WTC11 (cell line): ENCODE measurements at regions of chr4 and their contacts with region 1.

Region 1: DNA sequence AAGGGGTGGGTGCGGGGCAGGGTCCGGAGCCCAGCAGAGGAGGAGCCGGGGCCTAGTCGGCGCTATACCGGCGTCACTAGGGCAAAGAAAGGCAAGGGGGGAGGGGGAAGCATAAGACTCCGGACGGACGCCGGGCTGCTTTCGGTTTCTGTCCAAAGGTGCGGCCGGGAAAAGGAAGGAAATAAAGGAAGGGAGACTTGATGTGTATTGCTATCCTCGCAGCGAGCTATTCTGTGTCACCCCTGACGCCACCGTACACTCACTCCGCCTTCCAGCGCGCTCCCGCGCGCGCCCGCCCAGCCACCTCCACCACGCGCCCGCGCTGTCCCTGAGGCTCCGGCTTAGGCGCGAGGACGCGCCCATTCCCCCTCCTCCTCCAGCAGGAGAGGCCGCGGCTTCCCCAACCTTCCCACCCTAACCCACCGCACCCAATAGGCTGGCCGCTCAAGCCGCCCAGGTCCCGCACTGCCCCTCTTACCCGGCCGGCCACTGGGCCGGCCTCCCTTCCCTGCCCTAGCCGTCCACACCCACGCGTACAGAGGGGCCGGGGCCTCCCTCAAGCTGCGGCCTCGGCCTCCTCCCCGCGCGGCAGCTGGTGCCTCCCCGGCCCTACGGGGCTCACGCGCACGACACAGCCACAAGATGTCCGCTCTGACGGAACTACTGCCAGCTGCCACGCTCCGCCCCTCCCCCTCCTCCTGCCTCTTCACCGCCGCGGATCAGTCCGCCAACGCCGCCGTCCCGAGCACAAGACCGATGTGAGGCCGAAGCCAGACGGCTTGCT is at the start of gene UBE2D3:
- DNase-seq: peak; percentile 92
- ATAC-seq: peak; percentile 27
- H3K4me3 Mint-ChIP-seq: no peak within 1 kb of the TSS
- H3K27ac Mint-ChIP-seq: no peak within 1 kb of the TSS; the same call in none of the 2 replicates
- H3K4me1 Mint-ChIP-seq: peaks cover 45% of the 10 kb centered on the region
- H3K27me3 Mint-ChIP-seq: no peaks in the 10 kb centered on the region
- CTCF ChIP-seq: no peak
- total RNA-seq, gene UBE2D3: 326 to 351 TPM (median 334 TPM) in 3 replicates

Region 2: GRCh38 chr4:102554482-102554881 is 272.6 kb before region 1 on chr4:
- CTCF ChIA-PET with region 1: no interaction called
- POLR2A ChIA-PET with region 1: no interaction called
- DNase-seq: peak; percentile 11
- ATAC-seq: peak; percentile 81
- H3K4me3 Mint-ChIP-seq: no peak overlapping the region
- H3K27ac Mint-ChIP-seq: peak overlapping the region; percentile 7; the same call in 1 of the 2 replicates
- H3K4me1 Mint-ChIP-seq: peaks cover 5% of the 10 kb centered on the region
- H3K27me3 Mint-ChIP-seq: no peaks in the 10 kb centered on the region
- CTCF ChIP-seq: no peak

Region 3: DNA sequence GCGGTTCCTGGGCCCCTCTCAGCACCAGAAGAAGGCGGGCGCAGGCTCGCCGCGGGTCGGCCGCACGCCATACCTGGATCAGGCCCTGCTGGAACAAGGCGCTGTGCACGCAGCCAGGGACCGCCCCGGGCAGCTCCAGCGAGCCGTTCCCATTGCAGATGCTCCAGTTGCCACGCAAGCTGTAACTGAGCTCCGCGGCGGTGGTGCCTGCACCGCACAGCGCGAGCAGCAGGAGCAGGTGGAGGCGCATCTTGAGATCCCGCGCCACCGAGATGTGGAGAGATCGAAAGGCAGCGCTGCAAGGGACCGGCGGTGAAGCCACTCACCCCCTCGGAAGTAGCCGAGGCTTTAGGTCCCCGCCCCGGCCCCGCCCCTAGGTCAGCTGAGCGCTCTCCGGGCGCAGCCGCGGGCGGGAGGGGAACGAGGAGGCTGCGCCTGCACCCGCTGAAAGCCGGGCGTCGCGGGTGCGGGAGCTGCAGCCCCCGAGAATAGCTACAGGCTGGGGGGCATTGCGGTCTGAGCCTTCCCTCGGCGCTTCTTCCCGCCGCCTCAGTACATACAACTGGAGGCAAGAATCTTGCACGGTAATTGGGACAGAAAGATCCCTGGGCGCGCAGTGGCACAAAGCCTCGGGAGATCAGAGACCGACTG is 66.3 kb before region 1 on chr4 and contains the start of gene MANBA:
- CTCF ChIA-PET with region 1: interaction called, 3 read pairs
- POLR2A ChIA-PET with region 1: interaction called, 44 read pairs
- DNase-seq: peak; percentile 85
- ATAC-seq: peak; percentile 90
- H3K4me3 Mint-ChIP-seq: peak within 1 kb of the TSS; percentile 97
- H3K27ac Mint-ChIP-seq: peak within 1 kb of the TSS; percentile 86
- H3K4me1 Mint-ChIP-seq: peaks cover 33% of the 10 kb centered on the region
- H3K27me3 Mint-ChIP-seq: no peaks in the 10 kb centered on the region; the same call in 1 of the 2 replicates
- CTCF ChIP-seq: no peak
- total RNA-seq, gene MANBA: 35.1 to 37.6 TPM (median 37.5 TPM) in 3 replicates

Region 4: DNA sequence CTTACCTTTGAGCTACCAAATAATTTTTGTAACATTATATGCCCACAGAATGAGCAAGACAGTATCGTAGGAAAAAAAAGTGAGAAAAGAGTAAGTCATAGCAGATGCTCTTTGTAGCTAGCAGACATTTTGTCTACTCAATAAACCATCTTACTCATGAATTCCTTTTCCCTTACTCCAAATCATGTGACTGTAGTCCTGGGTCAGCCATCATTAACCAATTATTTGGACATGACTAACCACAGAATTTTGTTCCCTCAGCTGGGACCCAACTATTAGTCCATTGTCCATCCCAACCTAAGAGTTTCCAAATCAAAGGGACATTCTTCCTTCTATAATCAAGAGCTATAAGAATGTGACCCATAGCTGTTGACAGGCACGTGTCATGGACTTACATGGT is 11.1 kb before region 1 on chr4:
- CTCF ChIA-PET with region 1: interaction called, 4 read pairs
- POLR2A ChIA-PET with region 1: interaction called, 18 read pairs
- DNase-seq: no peak
- ATAC-seq: no peak
- H3K4me3 Mint-ChIP-seq: no peak overlapping the region
- H3K27ac Mint-ChIP-seq: no peak overlapping the region
- H3K4me1 Mint-ChIP-seq: peaks cover 77% of the 10 kb centered on the region
- H3K27me3 Mint-ChIP-seq: no peaks in the 10 kb centered on the region
- CTCF ChIP-seq: no peak

Region 5: GRCh38 chr4:102843273-102843672 is 16.2 kb after region 1 on chr4:
- CTCF ChIA-PET with region 1: no interaction called
- POLR2A ChIA-PET with region 1: interaction called, 10 read pairs
- DNase-seq: no peak
- ATAC-seq: no peak
- H3K4me3 Mint-ChIP-seq: no peak overlapping the region
- H3K27ac Mint-ChIP-seq: no peak overlapping the region
- H3K4me1 Mint-ChIP-seq: no peaks in the 10 kb centered on the region
- H3K27me3 Mint-ChIP-seq: no peaks in the 10 kb centered on the region
- CTCF ChIP-seq: no peak

Region 6: GRCh38 chr4:102868781-102869568 is 41.9 kb after region 1 on chr4 and contains the start of gene CISD2:
- CTCF ChIA-PET with region 1: interaction called, 7 read pairs
- POLR2A ChIA-PET with region 1: interaction called, 113 read pairs
- DNase-seq: peak; percentile 93
- ATAC-seq: peak; percentile 91
- H3K4me3 Mint-ChIP-seq: peak within 1 kb of the TSS; percentile 81
- H3K27ac Mint-ChIP-seq: peak within 1 kb of the TSS; percentile 100
- H3K4me1 Mint-ChIP-seq: peaks cover 44% of the 10 kb centered on the region
- H3K27me3 Mint-ChIP-seq: no peaks in the 10 kb centered on the region
- CTCF ChIP-seq: no peak
- total RNA-seq, gene CISD2: 30.0 to 36.6 TPM (median 36.2 TPM) in 3 replicates

Region 7: DNA sequence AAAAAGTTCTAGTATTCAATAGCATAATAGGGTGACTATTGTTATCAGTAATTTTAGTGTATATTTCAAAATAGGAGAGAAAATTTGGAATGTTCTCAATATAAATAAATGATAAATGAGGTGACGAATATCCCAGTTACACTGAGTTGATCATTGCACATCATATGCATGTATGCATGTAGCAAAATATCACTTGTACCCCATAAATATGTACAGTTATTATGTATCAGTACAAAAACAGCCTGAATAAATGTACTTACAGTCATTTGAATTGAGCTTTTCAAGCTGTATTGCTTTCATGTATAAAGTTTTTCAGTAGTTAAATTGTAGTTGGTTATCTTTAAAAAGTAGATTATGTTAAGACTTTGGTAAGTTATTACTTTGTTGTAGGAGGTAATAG is 54.3 kb after region 1 on chr4:
- CTCF ChIA-PET with region 1: no interaction called
- POLR2A ChIA-PET with region 1: no interaction called
- DNase-seq: no peak
- ATAC-seq: no peak
- H3K4me3 Mint-ChIP-seq: no peak overlapping the region
- H3K27ac Mint-ChIP-seq: no peak overlapping the region
- H3K4me1 Mint-ChIP-seq: peaks cover 13% of the 10 kb centered on the region
- H3K27me3 Mint-ChIP-seq: no peaks in the 10 kb centered on the region
- CTCF ChIP-seq: no peak

Region 8: DNA sequence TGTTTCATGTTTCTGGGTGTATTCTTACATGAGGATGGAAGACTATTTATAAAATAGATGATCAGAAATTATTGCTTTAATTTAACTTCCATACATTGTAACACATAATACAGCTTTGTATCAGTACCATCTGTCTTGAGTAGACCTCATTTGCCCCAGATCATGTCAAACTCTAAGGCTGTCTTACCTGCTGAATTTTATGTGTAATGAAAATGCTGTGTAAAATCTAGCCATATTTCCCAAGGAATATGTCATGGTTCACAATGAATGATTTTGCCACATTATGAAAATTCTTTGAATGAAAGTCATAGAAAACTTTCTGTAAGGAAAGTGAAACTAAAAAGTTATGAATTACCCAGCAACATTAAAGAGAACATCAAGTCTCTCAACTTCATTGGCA is 265.2 kb after region 1 on chr4:
- CTCF ChIA-PET with region 1: no interaction called
- POLR2A ChIA-PET with region 1: no interaction called
- DNase-seq: no peak
- ATAC-seq: no peak
- H3K4me3 Mint-ChIP-seq: no peak overlapping the region
- H3K27ac Mint-ChIP-seq: no peak overlapping the region
- H3K4me1 Mint-ChIP-seq: no peaks in the 10 kb centered on the region
- H3K27me3 Mint-ChIP-seq: no peaks in the 10 kb centered on the region
- CTCF ChIP-seq: no peak